Esophagus muscularis mucosa (tissue), 4 donors: ENCODE measurements at regions of chr2 and their contacts with region 1.

Region 1: GRCh38 chr2:221969087-221969829 is 329.5 kb downstream of the PAX3 start:
- DNase-seq: no peak
- H3K4me3 ChIP-seq: no peak overlapping the region
- H3K27ac ChIP-seq: no peak overlapping the region
- H3K4me1 ChIP-seq: peaks cover 0 to 6% (median 5%) of the 10 kb centered on the region in 4 donors
- H3K27me3 ChIP-seq: no peaks in the 10 kb centered on the region
- CTCF ChIP-seq: peak; percentile 67 to 69 (median 68)
- EP300 ChIP-seq: no peak
- POLR2A ChIP-seq: no peak

Region 2: GRCh38 chr2:220687231-220687843 is 1281.9 kb before region 1 on chr2:
- intact Hi-C with region 1: loop called (anchors 2 kb)
- DNase-seq: no peak
- H3K4me3 ChIP-seq: no peak overlapping the region
- H3K27ac ChIP-seq: no peak overlapping the region
- H3K4me1 ChIP-seq: peaks cover 0 to 4% (median 1%) of the 10 kb centered on the region in 4 donors
- H3K27me3 ChIP-seq: no peaks in the 10 kb centered on the region
- CTCF ChIP-seq: peak; percentile 84 to 91 (median 84)
- EP300 ChIP-seq: no peak
- POLR2A ChIP-seq: no peak